ENCODE measurements at regions of chr17 and their contacts with region 1.

Region 1: DNA sequence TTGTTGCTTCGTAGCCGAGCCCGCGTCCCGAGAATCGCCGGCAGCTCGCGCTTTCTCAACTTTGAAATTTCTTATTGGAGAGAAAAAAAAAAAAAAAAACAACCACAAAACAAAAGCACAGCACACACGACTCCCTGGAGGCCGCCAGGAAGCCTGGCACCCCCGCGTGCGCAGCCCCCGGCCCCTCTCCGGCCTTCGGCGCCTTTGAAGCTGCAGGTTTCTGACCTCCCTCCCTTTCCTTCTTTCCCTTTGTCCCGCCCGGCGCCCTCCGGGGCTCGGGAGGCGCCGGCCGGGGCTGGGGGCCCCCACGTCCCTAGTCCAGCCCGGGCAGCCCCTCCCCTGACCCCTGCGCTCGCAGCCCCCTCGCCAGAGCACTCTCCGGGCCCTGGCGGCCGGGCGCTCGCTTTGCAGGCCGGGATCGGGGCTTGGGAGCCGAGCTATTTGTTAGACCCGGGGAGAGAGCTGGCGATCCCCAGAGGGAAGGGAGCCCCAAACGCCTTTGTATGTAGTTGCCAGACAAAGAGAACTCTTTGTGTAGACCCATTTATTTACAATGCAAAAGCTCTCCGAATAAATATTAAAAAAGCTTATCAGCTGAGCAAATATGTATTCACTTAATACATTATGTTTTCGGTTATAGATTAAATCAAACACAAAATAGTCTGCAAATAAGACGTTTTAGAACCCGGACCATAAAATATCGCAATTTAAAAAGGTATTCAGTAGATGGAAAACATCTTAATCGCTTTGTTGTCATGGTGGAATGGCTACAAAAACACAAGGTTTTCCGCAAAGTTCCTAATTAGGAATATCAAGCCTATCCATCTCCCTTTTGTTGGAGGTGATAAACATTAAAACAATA is 2.3 kb downstream of the BAHCC1 start:
- DNase-seq: no peak
- ATAC-seq: no peak
- H3K4me3 Mint-ChIP-seq: peak overlapping the region; percentile 19 to 84 (median 60)
- H3K27ac Mint-ChIP-seq: peak overlapping the region in 3 of 10 donors; percentile 24 to 68 (median 53)
- H3K4me1 Mint-ChIP-seq: peaks cover 13 to 45% (median 32%) of the 10 kb centered on the region in 4 donors
- H3K27me3 Mint-ChIP-seq: peaks cover 30 to 64% (median 40%) of the 10 kb centered on the region in 5 donors

Region 2: DNA sequence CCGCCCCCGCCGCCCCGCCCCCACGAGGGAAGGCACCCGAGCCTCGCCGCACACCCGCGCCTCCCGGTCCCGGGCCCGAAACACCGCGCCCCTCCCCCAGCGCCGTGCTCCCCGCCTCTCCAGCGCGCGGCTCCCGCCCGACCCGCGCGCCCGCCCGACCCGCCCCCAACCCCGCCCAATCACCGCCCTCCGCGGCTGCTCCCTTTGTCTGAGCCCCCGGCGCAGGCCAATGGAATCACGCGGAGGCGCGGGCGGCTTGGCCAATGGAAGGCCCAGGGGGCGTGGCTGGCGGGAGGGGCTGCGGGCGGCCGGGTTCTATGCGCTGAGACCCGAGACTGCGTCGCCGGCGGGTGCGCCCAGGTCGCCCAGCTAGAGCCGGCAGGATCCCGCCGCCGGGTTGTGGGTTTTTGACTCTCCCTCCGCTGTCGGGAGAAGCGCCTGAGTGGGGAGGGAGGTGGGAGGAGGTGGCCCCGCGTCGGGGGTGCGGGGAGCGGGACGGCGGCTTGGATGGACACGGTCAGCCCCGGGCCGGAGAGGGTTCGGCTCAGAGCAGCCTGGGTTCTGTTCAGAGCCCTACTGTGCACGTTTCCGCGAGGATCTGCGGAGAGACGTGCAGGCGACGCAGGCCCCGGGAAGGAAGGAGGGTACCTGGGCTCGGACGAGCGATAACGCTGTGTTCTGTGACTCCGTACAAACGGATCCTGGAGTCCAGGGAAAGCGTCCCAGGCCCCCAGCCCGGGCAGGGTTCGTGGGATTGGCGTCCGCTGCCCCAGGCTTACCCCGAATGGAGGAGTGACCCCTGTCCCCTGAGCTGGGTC is 51.2 kb before region 1 on chr17:
- POLR2A ChIA-PET with region 1: no interaction called
- DNase-seq: peak; percentile 88 to 95 (median 92)
- ATAC-seq: peak; percentile 91 to 96
- H3K4me3 Mint-ChIP-seq: peak overlapping the region in 9 of 10 donors; percentile 33 to 73 (median 63)
- H3K27ac Mint-ChIP-seq: no peak overlapping the region
- H3K4me1 Mint-ChIP-seq: peaks cover 8 to 32% (median 24%) of the 10 kb centered on the region in 4 donors
- H3K27me3 Mint-ChIP-seq: peaks cover 16 to 57% (median 22%) of the 10 kb centered on the region in 5 donors

Region 3: DNA sequence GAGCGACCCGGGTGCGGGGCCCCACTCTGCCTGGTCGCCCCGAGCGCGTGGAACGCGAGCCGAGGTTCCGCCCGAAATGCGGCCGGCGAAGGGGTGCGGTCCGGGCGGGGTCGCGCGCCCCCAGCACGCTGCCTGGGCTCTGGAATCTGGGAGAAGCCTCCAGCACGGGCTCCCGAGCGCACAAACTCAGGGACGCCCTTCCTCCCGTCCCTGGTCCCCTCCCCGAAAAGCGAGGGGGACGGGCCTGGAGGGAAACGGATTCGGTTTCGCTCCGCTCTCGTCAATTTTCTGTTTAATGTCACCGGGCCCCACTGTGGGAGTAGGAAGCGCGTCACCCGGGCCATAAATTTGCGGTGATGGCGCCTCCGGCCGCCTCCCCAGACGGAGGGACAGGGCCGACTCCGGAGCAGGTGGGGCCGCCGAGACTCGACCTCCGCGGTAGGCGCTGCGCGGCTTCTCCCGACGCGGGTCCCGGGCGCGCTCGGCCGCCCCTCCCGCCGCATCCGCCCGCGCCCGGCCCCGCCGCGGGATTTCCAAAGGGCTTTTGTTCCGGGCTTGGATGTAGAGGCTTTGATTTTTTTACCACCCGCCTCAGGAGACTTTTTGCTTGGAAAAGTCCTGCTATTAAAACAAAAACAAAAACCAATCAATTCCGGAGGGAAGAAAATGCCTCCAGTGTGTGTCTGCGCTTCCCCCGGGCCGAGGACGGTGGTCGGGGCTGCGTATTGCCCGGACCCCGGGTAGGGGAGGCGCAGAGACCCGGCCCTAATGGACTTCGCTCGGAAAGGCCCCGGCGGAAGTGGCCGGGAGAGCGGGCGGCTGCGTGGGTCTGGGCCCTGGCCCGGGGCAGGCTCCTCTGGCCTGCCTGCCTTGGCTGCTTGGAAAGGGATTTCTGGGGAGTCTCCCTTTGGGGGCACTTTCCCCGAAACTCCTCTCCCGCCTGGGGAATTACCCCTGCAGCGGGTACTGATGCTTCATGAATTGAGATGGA is 10.2 kb before region 1 on chr17:
- POLR2A ChIA-PET with region 1: no interaction called
- DNase-seq: no peak
- ATAC-seq: peak; percentile 59 to 66
- H3K4me3 Mint-ChIP-seq: peak overlapping the region; percentile 58 to 81 (median 72)
- H3K27ac Mint-ChIP-seq: peak overlapping the region in 1 of 10 donors; percentile 9
- H3K4me1 Mint-ChIP-seq: peaks cover 0 to 6% (median under 1%) of the 10 kb centered on the region in 4 donors
- H3K27me3 Mint-ChIP-seq: peaks cover 18 to 71% (median 36%) of the 10 kb centered on the region in 5 donors

Region 4: DNA sequence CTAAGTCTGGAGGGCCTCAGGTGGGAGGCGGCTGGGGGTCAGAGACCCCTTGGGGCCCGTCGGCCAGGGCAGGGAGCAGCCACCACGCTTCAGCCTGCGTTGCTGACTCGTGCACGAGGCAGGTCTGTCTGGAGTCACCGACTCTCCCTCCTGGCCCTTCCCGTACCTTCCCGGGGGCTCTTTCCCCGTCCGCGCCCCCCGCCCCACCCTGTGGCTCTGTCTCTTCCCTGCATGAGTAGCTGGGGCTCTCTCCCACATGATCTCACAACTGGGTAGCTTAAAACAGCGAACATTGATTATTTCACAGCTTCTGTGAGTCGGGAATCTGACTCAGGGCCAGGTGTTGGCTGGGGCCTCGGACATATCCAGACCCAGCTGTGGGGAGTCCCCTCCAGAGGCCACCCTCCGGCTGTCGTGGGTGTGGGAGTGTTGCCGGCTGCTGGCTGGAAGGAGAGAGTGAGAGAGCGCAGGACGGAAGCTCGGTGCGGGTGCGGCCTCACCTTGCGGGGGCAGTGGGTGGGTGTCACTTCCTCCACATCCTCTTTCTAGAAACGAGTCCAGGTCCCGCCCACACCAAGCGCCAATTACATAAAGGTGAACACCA is 15.0 kb after region 1 on chr17:
- POLR2A ChIA-PET with region 1: interaction called, 10 read pairs
- DNase-seq: peak; percentile 34 to 83 (median 62)
- ATAC-seq: peak; percentile 93 to 97
- H3K4me3 Mint-ChIP-seq: peak overlapping the region; percentile 67 to 87 (median 82)
- H3K27ac Mint-ChIP-seq: peak overlapping the region in 6 of 10 donors; percentile 25 to 86 (median 60)
- H3K4me1 Mint-ChIP-seq: peaks cover 7 to 31% (median 19%) of the 10 kb centered on the region in 4 donors
- H3K27me3 Mint-ChIP-seq: peaks cover 0 to 20% (median 17%) of the 10 kb centered on the region in 5 donors

Measured in naive thymus-derived CD8-positive, alpha-beta T cell (primary cell).